Activated T-helper 1 cell treated with anti-CD3 and anti-CD28 coated beads, Interleukin-12 subunit alpha, Interleukin-12 subunit beta, Interleukin-2, Interleukin-4 antibody, amounts not matched to agents 30 ng/mL and 10 ng/mL and 1 ng/mL, durations not matched to agents 14 hours and 24 hours and 36 hours (primary cell): ENCODE measurements at regions of chr17 and their contacts with region 1.

Region 1: GRCh38 chr17:38605888-38606645 is at the start of gene SRCIN1:
- DNase-seq: peak; percentile 44
- H3K4me3 Mint-ChIP-seq: peak within 1 kb of the TSS; percentile 73
- H3K27ac Mint-ChIP-seq: peak within 1 kb of the TSS; percentile 23
- H3K4me1 Mint-ChIP-seq: peaks cover 5% of the 10 kb centered on the region
- H3K27me3 Mint-ChIP-seq: peaks cover 69% of the 10 kb centered on the region
- total RNA-seq, gene SRCIN1: 0.22 and 0.44 TPM in 2 replicates

Region 2: DNA sequence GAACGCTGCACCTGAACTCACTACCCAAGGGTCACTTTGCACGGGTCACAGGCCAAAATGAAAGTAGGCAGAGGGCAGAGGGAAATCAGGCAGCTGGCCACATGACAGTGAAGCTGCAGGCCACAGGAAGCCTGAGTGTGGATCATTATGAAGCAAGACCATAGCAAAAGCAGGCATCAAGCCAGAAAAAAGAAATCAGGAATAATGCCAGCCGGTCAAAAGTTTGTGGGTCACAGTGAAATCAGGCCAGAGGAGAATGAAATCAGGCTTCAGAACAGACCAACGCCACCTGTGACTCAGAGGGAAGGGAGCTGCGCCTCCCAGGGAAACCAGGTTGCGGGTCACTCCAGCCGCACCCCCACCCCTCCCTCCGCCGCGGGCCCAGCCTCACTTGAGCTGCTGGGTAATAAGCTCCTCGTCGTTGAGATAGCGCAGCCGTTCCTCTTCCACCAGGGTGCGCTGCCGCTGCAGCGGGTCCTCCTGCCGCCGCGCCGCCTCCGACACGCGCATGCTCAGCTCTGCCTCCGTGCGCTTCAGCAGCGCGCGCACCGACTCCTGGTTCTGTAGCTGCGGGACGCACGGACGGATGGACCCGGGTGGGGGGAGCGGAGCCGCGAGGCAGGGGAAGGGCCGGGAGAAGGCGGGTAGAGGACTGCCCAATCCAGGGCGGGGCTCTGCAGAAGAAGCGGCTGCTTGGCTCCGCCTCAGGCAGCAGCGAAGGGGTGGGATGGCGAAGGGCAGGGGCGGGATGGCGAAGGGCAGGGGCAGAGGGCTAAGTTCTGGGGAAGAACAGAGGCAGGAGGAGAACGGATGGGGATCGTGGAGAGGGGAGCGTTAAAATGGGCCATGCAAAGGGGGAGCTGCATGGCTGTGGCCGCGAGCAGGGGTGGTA is 48.0 kb before region 1 on chr17:
- intact Hi-C with region 1: loop called (anchors 2 kb)
- DNase-seq: peak; percentile 87
- H3K4me3 Mint-ChIP-seq: peak overlapping the region; percentile 95
- H3K27ac Mint-ChIP-seq: peak overlapping the region; percentile 69
- H3K4me1 Mint-ChIP-seq: peaks cover 27% of the 10 kb centered on the region
- H3K27me3 Mint-ChIP-seq: peaks cover 48% of the 10 kb centered on the region